ENCODE measurements at regions of chr9 and their contacts with region 1.

Region 1: DNA sequence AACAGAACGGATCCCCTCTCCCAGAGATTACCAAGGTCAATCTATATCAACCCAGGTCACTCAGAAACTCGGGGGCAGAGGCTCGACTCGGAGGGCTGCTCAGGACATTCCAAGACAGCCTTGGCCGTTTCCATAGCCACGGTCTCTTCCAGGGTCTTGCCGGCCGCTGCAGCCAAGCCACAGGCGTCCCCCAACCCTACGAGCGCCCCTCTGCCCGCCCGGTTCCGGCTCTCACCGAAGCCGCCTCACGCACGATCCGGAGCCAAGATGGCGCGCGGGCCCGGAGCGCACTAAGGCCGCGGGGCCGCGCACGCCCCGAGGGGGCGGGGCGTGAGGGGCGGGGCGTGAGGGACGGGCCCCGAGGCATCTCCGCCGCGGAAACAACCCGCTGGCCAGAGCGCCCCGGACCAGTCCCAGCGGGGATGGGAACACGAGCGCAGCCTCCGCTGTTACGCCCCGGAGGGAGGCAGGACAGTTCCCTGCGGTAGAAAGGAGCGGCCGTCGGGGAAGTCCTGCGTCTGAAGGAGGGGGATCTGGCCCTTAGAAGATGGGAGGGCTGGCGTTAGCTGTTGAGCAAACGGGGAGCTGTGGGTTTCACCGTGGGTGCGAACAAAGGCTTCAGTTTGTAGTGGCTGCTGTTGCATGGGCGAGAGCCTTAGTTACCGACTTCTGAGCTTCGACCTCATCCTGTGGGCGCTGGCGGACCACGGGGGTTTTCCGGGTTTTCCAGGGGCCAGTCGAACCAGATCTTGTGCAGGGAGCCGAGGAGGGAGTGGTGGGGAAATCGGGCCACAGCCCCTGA is at the start of gene RPP25L:
- DNase-seq: peak; percentile 63 to 92
- H3K4me3 ChIP-seq: peak within 1 kb of the TSS; percentile 77 to 92
- H3K27ac ChIP-seq: peak within 1 kb of the TSS; percentile 71 to 83
- H3K4me1 ChIP-seq: peaks cover 3 to 13% of the 10 kb centered on the region in 2 donors
- H3K27me3 ChIP-seq: no peaks in the 10 kb centered on the region
- CTCF ChIP-seq: no peak
- total RNA-seq, gene RPP25L: 7.2 TPM

Region 2: DNA sequence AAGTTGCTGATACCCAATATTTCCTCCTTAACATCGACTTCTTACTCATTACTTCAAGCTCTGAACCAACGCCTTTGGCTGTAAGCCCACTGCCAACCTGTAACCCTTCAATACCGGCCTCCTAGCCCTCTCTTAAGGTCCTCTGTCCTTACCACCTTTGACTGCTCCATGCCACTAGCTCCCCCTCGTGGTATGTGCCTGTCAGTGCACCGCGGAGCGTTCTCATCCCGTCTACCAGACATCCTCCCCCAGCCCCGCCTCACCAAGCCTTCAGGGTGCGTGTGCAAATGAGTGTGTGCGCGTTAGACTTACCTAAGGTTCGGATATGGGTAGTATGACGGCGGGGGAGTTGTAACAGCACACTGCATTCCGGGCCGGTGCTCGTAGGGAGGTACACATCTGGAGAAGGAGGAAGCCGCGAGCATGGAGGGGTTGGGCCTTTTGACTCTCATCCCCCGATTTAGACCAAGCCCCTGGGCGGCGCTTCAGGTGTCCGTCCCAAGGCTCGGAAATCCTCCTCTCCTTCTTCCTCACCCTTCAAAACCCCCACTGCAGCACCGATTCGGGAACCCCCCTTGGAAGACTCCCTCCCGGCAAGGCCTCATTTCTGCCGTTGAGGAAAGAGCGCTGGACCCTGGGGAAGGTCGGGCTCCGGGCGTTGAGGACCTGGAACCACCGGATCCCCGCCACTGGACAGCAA is 232.5 kb before region 1 on chr9:
- intact Hi-C with region 1: no loop called
- DNase-seq: peak; percentile 72 to 94
- H3K4me3 ChIP-seq: peak overlapping the region; percentile 14 to 62
- H3K27ac ChIP-seq: no peak overlapping the region
- H3K4me1 ChIP-seq: peaks cover 7 to 16% of the 10 kb centered on the region in 2 donors
- H3K27me3 ChIP-seq: no peaks in the 10 kb centered on the region
- CTCF ChIP-seq: peak; percentile 96 to 99 (median 97)

Region 3: GRCh38 chr9:34522971-34523797 is 88.8 kb before region 1 on chr9 and contains the start of gene ENHO:
- intact Hi-C with region 1: loop called (anchors 5 kb)
- DNase-seq: peak; percentile 26 to 93
- H3K4me3 ChIP-seq: peak within 1 kb of the TSS; percentile 47 to 68
- H3K27ac ChIP-seq: no peak within 1 kb of the TSS
- H3K4me1 ChIP-seq: peaks cover 3 to 5% of the 10 kb centered on the region in 2 donors
- H3K27me3 ChIP-seq: no peaks in the 10 kb centered on the region
- CTCF ChIP-seq: no peak
- total RNA-seq, gene ENHO: not detected

Region 4: DNA sequence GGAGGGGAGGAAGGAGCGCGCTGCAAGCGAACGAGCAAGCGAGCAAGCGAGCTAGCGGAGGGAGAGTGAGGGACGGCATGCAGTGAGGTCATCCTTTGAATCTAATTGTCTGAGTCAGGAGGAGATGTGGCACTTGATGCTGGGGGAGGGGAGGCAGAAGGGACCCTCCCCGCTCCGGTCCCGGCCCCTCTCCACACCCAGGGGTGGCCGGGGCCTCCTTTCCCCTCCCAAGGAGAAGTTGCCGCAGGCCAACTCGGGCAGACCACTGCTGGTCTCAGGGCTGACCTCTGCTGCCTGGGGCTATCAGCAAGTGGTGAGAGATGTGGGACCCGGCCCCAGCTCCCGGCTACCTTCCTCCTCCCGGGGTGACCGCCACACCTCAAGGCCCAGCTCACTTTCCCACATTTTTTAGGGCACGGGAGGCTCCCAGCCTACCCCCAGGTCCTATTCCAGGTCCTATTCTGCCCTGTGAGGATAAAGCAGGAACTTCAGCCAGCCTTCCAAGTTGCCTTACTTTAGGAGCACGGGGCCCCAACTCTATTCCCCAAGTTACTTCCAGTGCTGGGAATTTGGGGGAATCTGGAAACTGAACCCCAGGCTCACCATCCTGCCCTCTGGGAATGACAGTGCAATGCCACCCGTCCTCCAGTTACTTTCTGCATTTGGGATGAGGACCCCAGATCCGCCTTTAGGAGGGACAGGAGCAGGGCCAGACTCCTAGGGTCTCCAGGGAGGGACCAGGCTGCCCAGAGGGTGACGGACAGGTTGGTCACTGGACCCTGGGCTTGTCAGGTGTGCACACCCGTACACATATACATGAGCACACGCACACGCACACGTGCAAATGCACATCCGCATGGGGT is 33.6 kb before region 1 on chr9:
- intact Hi-C with region 1: no loop called
- DNase-seq: no peak
- H3K4me3 ChIP-seq: peak overlapping the region; percentile 45 to 55
- H3K27ac ChIP-seq: no peak overlapping the region
- H3K4me1 ChIP-seq: peaks cover 0 to 5% of the 10 kb centered on the region in 2 donors
- H3K27me3 ChIP-seq: peaks cover 3% of the 10 kb centered on the region
- CTCF ChIP-seq: no peak

Region 5: GRCh38 chr9:34637356-34638137 is 25.5 kb after region 1 on chr9 and contains the start of gene SIGMAR1:
- intact Hi-C with region 1: loop called (anchors 1 kb)
- DNase-seq: peak; percentile 54 to 94
- H3K4me3 ChIP-seq: peak within 1 kb of the TSS; percentile 61 to 83
- H3K27ac ChIP-seq: peak within 1 kb of the TSS; percentile 76 to 79
- H3K4me1 ChIP-seq: peaks cover 0 to 13% of the 10 kb centered on the region in 2 donors
- H3K27me3 ChIP-seq: no peaks in the 10 kb centered on the region
- CTCF ChIP-seq: peak in 2 of 3 experiments; percentile 4 to 7
- total RNA-seq, gene SIGMAR1: 61.3 TPM

Region 6: DNA sequence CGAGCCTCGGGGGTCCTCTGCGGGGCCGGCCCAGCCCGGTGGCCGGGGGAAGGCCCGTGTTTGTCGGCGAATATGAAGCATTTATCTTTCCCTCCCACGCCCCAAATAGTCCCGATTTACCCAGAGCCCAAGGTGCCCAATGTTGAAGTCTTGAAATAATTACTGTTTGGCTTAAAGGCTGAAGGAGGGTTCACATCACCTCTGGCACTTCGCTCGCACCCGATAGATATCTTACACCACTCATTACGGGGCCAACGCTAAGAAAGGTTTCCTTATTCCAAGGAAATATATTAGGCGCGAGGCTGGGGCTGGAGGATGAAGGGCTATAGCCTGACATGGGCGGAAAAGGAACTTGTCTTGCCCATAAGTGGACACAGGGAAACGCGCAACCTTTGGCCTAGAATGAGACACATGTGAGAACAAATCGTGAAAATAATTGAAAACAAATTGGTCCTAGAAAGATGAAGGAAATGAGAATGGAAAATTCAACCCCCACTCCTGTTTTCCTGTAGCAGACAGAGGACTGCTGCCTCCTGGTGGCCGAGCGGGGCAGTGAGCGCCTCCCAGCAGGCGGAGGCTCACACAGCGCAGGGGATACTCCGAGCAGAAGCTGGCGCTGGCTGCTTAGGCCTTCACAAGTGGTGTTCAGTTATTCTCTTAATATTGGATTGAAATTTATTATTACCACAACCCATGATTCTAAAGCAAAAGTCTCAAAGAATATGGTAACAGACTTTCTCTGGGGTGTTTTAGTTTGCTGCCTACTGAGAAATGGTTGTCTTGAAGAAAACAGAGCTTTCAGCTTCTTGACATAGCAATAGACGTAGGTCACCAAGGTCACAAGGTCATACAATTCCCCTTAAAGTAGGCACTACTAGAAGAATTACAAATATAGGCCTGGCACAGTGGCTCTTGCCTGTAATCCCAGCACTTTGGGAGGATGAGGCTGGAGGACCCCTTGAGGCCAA is 90.0 kb after region 1 on chr9:
- intact Hi-C with region 1: loop called (anchors 2 kb)
- DNase-seq: peak; percentile 20 to 92
- H3K4me3 ChIP-seq: peak overlapping the region; percentile 59 to 73
- H3K27ac ChIP-seq: peak overlapping the region; percentile 87 to 91
- H3K4me1 ChIP-seq: no peaks in the 10 kb centered on the region
- H3K27me3 ChIP-seq: no peaks in the 10 kb centered on the region
- CTCF ChIP-seq: peak; percentile 91 to 99 (median 98)

Region 7: GRCh38 chr9:34759432-34760134 is 147.6 kb after region 1 on chr9:
- intact Hi-C with region 1: no loop called
- DNase-seq: no peak
- H3K4me3 ChIP-seq: no peak overlapping the region
- H3K27ac ChIP-seq: no peak overlapping the region
- H3K4me1 ChIP-seq: no peaks in the 10 kb centered on the region
- H3K27me3 ChIP-seq: no peaks in the 10 kb centered on the region
- CTCF ChIP-seq: no peak

Measured in ascending aorta (tissue), 2 donors.